Left cardiac atrium (tissue), 4 donors: ENCODE measurements at regions of chr1 and their contacts with region 1.

Region 1: GRCh38 chr1:248189026-248189425 is 8.0 kb upstream of the OR2M3 start:
- DNase-seq: no peak
- ATAC-seq: no peak

Region 2: DNA sequence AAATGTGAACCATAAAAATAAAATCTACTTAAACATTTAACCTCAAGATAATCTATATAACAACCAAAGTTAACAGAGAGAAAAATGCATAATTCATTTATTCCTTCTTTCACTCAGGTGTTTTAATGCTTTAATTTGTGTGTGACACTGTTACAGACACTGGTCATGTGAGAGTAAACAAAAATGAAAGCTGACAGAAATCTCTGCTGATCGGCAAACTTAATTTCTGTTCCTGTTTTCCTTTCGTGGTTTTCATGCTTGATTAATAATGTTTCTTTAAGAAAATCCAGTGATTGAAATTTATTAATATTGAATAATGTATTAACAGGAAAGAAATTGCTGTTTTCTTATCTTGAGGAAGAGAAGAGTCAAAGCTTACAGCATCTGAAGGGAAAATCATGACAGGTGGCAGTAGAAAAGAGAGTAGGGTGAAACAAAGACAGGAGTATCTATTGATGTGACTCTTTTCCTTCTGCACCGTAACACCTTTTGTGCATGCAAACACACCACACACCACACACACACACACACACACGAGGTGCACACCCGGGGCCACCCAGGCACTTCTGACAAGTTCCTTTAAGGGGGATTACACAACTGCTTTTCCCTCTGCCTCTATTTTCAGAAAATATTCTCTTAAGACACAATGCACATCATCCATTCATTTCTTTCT is 222.4 kb before region 1 on chr1:
- intact Hi-C with region 1: no loop called
- DNase-seq: no peak
- ATAC-seq: no peak

Region 3: GRCh38 chr1:248009681-248010080 is 179.3 kb before region 1 on chr1:
- intact Hi-C with region 1: no loop called
- DNase-seq: no peak
- ATAC-seq: no peak

Region 4: DNA sequence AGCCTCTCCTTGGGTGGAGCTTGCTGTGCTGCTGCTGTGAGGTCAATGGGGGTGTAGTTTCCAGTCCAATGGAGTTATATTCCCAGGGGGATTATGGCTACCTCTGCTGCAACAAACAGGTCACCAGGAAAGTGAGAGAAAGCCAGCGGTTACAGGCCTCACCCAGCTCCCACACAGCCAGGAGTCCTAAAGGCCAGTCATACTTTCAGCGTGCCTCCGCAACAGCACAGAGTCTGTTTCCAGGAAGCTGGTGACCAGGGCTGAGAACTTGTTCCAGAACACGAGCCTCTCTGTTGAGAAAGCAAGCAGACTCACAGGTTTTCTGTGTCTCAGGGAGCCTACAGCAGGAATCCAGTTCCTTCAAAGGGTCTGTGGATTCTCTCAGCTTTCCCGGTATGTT is 61.4 kb before region 1 on chr1:
- intact Hi-C with region 1: no loop called
- DNase-seq: no peak
- ATAC-seq: no peak

Region 5: GRCh38 chr1:248140846-248141245 is 48.2 kb before region 1 on chr1:
- intact Hi-C with region 1: loop called in 1 of 2 experiments (anchors 5 kb)
- DNase-seq: no peak
- ATAC-seq: no peak